HepG2 (cell line): ENCODE measurements at regions of chr2 and their contacts with region 1.

Region 1: DNA sequence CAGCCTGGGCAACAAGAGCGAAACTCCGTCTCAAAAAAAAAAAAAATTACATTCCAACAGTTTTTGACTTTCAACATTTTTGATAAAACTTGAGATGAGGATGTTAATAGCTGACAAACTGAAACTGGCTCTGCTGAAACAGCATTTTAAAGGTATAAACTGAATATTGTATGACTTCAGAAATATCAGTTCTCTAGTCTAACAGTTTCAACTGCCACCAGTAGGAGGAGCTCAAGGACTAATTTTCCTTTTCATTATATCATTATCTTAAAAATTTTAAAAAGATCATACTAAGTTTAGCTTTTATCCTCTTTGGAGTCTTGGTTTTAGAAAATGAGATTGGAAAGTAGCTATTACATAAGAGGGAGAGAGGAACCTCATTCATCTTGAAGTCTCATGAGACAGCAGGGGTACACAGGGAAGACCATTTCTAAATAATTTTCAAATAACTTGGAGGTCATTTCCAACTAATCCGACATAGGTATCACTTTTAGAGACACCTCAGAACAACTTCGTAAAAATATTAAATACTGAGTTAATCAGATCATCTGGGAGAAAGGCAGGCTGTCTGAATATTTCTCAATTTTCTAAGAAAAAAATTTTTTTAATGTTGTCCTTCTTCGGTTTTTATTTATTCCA is 37.6 kb upstream of the MCM6 start:
- DNase-seq: peak; percentile 40
- ATAC-seq: peak; percentile 69
- H3K4me3 ChIP-seq: no peak overlapping the region
- H3K27ac ChIP-seq: no peak overlapping the region
- H3K4me1 ChIP-seq: no peaks in the 10 kb centered on the region
- H3K27me3 ChIP-seq: no peaks in the 10 kb centered on the region
- CTCF ChIP-seq: peak; percentile 58
- EP300 ChIP-seq: no peak
- POLR2A ChIP-seq: no peak
- RAD21 ChIP-seq: no peak

Region 2: DNA sequence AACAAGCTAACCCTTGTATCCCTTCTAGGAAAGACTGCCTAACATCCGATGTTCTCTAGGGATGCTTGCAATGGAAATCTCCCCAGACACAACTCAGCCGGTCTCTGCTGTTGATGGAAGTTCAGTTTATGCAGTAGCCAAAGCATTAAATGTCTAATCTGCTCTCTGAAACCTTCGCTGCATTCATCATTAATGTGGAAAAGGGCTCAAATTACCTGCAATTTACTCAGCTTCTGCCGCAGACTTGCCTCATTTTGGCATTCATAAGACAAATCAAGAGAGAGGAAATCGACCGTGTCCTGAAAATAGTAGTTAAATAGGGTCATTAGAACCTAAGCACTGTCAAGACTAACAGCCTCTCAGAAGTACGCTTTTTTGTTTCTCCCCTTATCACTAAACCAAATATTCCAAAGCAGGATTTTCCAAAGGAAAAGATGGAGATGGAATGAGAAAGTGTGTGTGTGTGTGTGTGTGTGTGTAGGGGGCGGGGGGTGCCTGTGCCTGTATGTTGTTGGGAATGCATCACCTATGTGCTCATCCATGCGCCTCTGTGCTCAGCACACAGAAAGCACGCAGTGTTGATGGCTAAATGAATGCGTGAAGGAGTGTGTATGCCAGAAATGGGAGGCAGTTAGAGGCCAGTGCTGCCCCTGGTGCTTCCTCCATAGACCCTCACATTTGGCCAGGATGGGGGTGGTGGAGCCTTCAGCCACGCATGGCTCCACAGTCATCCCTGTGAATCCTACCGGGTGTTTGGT is 84.3 kb before region 1 on chr2:
- CTCF ChIA-PET with region 1: no interaction called
- POLR2A ChIA-PET with region 1: no interaction called
- in situ Hi-C with region 1: no loop called
- intact Hi-C with region 1: no loop called
- DNase-seq: no peak
- ATAC-seq: no peak
- H3K4me3 ChIP-seq: no peak overlapping the region
- H3K27ac ChIP-seq: no peak overlapping the region
- H3K4me1 ChIP-seq: 0 out of 2 replicates have a peak, but pooled peaks cover 5% of the 10 kb centered on the region
- H3K27me3 ChIP-seq: peaks cover 2 to 8% of the 10 kb centered on the region in 2 experiments; a peak in 3 of 5 replicates
- CTCF ChIP-seq: no peak
- EP300 ChIP-seq: no peak
- POLR2A ChIP-seq: no peak
- RAD21 ChIP-seq: no peak

Region 3: GRCh38 chr2:136075466-136075865 is 161.6 kb after region 1 on chr2:
- CTCF ChIA-PET with region 1: interaction called, 3 read pairs
- POLR2A ChIA-PET with region 1: no interaction called
- in situ Hi-C with region 1: no loop called
- intact Hi-C with region 1: loop called (anchors 1 kb)
- DNase-seq: no peak
- ATAC-seq: peak; percentile 58
- H3K4me3 ChIP-seq: no peak overlapping the region
- H3K27ac ChIP-seq: no peak overlapping the region
- H3K4me1 ChIP-seq: no peaks in the 10 kb centered on the region
- H3K27me3 ChIP-seq: peaks cover 0 to 9% of the 10 kb centered on the region in 2 experiments; a peak in 2 of 5 replicates
- CTCF ChIP-seq: peak; percentile 40; the same call in 1 of the 2 replicates
- EP300 ChIP-seq: no peak
- POLR2A ChIP-seq: no peak
- RAD21 ChIP-seq: no peak

Region 4: DNA sequence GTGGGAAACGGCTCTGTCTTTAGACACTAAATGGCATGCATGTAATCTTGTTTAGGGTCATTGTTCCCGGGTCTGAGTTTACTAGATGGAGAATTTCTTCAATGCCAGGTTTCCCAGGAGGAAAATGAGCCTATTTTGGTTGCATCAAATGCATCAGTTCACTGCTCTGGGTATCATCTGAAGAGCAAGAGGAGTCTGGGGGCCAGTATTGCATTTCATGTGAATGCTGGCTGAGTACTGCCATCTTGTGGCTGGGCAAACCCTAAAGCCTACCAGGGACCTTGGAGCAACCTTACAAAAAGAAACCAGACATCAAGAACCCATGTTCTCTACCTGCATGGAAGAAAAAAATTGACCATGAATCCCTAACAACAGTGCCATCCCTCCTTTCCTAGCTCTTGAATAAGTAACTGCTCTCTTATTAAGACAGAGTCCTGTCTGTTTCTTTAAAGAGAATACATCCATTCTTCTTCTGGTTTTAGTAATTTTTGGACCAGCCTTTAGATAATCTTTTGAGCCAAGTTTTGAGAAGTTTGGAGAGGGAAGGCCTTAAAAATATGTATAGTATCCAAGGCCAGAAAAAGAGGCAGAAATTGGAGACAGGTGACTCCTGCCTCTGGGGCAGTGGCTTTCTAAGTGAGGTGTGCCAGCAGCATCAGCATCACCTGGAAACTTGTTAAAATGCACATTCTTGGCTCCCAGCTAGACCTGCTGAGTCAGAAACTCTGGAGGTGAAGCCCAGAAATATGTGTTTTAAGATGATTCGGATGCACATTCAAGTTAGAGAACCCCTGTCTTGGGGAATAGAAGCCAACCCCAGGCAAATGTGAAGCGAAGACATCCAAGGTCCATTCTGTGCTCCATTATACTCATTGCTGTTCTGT is 465.1 kb after region 1 on chr2:
- CTCF ChIA-PET with region 1: interaction called, 23 read pairs
- POLR2A ChIA-PET with region 1: no interaction called
- in situ Hi-C with region 1: loop called (anchors 5 kb)
- intact Hi-C with region 1: loop called (anchors 1 kb)
- DNase-seq: peak; percentile 35
- ATAC-seq: peak; percentile 89
- H3K4me3 ChIP-seq: no peak overlapping the region
- H3K27ac ChIP-seq: no peak overlapping the region
- H3K4me1 ChIP-seq: no peaks in the 10 kb centered on the region
- H3K27me3 ChIP-seq: peaks cover 0 to 3% of the 10 kb centered on the region in 2 experiments; a peak in 1 of 5 replicates
- CTCF ChIP-seq: peak; percentile 84
- EP300 ChIP-seq: no peak
- POLR2A ChIP-seq: no peak
- RAD21 ChIP-seq: peak; percentile 77